ENCODE measurements at regions of chr11 and their contacts with region 1.

Region 1: DNA sequence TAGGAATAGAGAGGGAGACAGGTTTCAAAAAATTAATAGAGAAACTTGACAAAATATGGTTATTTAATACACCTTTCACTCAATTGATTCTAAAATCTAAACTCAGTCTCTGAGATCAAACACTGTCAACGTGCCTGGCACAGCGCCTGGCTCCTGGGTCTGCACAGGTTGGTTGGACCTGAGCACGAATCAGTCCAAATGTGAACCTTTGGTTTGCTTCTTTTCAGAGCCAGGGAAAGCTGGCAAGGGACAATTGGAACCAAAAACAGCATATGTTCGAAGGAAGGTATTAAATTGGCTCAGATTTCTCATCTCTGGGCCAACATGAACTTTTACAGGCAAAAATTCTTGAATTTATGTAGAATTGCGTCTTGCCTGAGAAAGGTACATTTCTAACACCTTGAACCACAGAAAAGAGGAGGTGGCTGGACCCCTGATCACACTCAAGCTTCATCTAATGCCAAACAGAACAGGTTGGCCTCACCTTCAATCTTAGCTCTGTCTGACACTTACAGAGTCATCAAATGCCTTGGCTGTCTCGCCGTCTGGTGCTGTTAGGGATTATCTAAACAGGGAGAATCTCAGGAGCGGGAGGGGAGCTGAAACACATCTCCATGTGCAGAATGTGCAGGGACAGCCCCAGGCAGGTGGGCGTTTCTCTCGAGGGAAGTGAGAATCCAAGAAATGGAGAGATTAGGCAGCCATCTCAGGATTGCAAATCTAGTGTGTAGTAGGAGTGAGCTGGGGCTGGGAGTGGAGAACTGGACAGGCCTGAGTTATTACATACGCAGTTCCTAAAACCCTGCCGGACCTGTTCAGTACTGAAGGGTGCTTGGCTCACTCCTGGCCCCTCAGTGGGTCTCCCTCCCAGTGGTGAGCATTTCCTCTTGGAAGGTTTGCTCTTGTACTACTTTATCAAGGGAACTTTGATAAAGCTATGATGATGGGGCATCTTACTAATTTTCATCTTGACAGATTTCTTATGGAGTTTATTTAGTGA is 442.2 kb upstream of the B3GAT1 start:
- DNase-seq: no peak
- H3K4me3 ChIP-seq: no peak overlapping the region
- H3K27ac ChIP-seq: no peak overlapping the region
- H3K4me1 ChIP-seq: no peaks in the 10 kb centered on the region
- H3K27me3 ChIP-seq: no peaks in the 10 kb centered on the region
- CTCF ChIP-seq: no peak

Region 2: GRCh38 chr11:134921938-134922337 is 67.6 kb after region 1 on chr11:
- CTCF ChIA-PET with region 1: no interaction called
- dilution Hi-C with region 1: loop called (anchors 5 kb)
- in situ Hi-C with region 1: no loop called
- intact Hi-C with region 1: no loop called
- DNase-seq: no peak
- H3K4me3 ChIP-seq: no peak overlapping the region
- H3K27ac ChIP-seq: no peak overlapping the region
- H3K4me1 ChIP-seq: no peaks in the 10 kb centered on the region
- H3K27me3 ChIP-seq: no peaks in the 10 kb centered on the region
- CTCF ChIP-seq: no peak